ENCODE measurements at regions of chr10 and their contacts with region 1.

Region 1: DNA sequence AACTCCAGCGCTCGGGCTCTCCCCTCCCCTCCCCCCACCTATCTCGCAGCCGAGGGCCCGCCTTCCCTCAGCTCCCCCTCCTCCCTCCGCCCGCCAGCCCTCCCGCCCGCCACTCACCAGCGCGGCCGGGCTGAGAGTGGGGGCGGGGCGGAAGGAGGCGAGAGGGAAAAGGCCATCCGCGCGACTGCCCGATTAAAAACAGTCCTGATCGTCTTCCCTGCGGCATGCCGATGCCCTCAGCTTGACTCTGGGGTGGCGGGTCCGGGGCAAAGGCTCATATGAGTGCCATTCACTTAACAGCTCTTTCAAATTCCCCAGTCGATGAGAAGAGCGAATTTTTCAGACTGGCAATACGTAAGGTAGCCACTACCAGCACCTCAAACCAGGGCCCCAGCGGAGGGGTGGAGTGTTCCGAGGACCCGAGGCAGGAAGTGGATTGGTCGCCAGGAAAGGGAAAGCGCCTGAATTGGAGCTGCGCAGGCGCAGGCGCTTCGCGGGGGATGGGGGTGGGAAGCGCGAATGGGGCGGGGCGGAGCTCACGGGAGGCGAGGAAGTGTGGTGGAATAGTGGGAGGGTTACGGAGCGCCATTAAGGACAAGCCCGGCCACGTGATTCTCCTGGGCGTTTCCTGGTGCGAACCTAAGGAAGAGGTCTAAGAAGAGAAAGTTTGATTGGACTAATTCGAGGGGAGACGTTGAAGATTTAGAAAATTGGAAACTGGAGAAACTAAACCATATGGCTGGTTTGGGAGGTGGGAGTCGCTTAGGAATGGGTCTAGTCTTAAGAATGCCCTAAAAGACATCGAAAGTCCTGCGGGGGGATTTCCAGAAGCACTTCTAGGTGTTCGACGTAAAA is at the start of gene UPF2:
- DNase-seq: peak; percentile 98
- ATAC-seq: peak; percentile 97
- total RNA-seq, gene UPF2: 20.7 TPM

Region 2: DNA sequence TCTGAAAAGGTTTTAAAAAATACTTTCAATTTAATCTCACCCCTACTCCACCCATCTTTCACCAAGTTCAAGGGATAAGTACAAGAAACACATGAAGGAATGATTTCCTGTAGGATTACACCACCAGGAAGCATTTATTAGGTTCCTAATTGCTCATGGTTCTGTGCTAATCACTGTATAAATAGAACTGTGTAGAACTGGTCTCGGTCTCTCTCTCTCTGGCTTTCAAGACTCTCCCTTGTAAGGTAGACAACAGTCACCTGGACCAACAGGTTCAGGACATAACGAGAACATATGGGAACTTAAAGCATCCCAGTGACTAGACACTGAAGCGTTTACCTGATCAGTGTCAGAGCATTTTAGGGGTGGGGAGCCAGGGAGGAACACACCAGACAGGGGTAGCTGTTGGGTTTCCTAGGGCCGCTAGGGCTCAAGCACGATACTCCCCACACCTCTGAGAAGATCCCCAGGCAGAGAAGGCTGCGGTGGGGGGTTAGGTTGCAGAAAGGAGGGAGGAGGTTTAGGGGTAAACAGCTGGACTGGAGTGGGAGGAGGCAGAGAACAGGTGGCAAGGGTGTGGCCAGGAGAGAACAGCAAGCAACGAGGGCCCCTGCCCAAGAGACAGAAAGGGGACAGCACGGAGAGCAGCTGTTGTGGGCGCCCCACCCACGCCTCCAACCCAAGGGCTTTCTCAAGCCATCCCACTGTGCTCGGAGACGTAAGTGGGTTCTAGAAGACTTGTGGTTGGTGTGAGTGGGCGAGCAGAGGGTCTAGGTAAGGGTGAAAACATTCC is 379.1 kb before region 1 on chr10:
- intact Hi-C with region 1: no loop called
- DNase-seq: no peak
- ATAC-seq: no peak

Region 3: GRCh38 chr10:12068449-12069269 is 25.6 kb after region 1 on chr10 and contains the start of gene DHTKD1:
- intact Hi-C with region 1: loop called (anchors 1 kb)
- DNase-seq: peak; percentile 99
- ATAC-seq: peak; percentile 100
- total RNA-seq, gene DHTKD1: 22.9 TPM

Region 4: DNA sequence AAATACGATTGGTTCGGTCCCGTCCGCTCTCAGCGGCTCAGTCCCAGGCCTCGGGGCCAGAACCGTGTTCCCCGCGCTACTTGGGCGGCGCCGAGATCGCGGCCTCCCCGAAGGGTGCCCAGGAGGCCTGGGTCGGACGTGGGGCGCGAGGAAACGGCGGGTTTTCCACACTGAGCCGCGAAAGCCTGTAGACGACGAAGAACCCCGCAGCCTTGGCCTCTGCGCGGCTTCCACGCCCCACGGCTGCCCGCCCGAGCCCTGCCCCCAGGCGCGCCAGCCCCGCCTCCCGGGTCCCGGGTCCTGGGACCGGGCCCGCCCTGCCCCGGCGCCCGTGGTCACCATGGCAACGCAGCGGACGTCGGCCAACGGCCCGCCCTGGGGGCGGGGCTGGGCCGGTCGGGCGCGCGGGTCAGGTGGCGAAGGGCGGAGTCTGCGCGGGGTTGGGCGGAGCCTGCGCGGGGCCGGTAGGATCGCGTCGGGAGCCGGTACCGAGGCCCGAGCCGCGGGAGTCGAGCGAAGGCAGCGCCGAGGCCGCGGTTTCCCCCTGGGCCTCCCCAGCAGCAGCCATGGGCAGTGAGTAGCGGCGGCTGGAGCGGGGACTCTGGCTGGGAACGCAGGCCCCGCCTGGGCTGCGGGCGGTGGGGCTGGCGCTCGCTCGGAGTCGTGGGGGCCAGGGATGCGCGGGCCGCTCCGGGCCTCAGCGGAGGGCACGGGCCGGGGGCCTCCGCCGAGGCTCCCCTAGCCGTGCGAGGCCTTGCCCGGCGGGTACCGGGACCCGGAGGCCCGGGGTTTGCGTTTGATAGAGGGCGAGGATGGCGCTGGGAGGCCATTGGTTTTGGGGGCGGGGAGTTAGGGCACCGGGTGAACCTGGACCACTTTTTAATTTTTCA is 86.4 kb after region 1 on chr10 and contains the start of gene SEC61A2:
- intact Hi-C with region 1: loop called (anchors 1 kb)
- DNase-seq: peak; percentile 98
- ATAC-seq: peak; percentile 99
- total RNA-seq, gene SEC61A2: 10.2 TPM

Measured in Right ventricle myocardium inferior (tissue), 1 donor.